MCF 10A (cell line): ENCODE measurements at regions of chr10 and their contacts with region 1.

Region 1: DNA sequence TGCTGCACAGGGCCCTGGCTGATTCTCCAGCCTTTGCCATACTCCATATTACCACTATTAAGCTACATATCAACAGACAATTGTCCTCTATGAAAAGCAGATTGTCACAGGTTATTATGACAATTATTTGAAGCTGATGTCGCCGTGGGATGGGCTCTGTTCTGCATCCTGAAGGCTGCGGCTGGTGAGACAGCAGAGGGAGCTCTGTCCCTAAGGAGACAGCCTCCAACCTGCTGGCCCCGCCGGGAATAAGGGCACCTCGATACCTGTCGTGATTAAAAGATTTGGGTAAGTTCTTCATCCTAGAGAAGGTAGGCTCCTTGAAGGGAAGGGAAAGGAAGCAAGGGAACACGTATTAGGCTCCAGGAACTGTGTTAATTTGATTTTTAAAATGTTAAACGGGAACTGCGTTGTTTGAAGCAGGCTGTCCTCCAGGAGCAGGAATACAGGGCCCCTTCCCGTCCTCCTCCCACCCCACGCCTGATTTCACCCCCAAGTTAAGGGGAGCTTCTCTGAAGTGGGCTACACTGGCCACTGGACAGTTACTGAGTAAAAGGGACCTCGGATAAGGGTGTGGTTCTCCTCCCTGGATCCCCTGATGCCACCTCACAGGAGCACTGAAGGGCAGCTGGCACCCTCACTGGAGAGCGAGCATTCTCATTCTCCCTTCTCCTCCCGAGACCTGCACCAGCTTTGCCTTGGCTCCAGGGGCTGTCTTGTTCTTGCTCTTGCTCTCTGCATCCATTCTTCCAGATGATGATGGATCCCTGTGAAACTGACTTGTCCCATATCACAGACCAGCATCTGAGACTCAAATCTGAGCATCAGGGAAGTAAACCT is 11.8 kb upstream of the TIAL1 start:
- DNase-seq: peak; percentile 66
- H3K4me3 Mint-ChIP-seq: no peak overlapping the region
- H3K27ac Mint-ChIP-seq: no peak overlapping the region
- H3K4me1 Mint-ChIP-seq: peaks cover 5% of the 10 kb centered on the region
- H3K27me3 Mint-ChIP-seq: no peaks in the 10 kb centered on the region
- CTCF ChIP-seq: peak; percentile 58

Region 2: DNA sequence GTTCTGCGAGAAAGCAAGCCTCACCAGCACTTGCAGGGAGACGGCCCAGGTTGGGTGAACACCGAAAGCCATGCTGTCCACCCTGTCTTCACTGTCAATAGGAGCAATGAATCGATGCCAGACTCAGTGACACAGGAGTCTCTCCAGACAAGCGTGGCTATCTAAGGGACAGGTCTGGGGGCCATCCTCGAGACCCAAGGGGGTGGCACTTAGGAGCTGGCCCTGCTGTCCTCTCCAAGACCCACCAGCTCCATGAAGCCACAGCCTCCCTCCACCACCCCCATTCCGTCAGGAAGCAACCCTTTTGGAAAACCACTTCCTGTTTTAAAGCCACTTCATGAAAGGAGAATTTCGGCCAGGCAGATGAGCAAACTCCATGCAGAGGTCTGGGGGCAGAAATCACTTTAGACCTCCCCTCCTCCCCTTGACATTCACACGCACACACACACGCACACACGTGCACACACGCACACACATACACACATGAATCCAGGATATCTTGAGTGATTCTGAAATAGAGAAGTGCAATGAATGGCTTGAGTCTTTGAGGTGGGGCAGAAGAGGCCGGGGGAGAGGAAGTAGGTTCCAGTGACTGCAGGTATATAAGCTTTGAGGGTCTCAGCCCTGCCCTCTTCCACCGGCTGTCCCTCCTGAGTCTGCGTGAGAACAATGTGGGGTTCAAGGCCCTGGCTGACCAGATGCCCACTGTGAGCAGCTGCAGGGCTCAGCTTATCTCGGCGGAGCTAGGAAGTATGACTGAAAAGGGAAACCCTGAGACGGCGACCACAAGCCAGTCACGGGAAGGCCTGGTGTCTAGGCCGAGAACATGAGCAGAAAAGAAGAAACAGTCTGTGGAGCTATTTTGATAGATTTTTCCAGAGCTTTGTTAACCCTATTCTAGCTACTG is 91.0 kb before region 1 on chr10:
- CTCF ChIA-PET with region 1: no interaction called
- POLR2A ChIA-PET with region 1: no interaction called
- intact Hi-C with region 1: no loop called
- DNase-seq: no peak
- H3K4me3 Mint-ChIP-seq: no peak overlapping the region
- H3K27ac Mint-ChIP-seq: peak overlapping the region; percentile 63
- H3K4me1 Mint-ChIP-seq: peaks cover 11% of the 10 kb centered on the region
- H3K27me3 Mint-ChIP-seq: no peaks in the 10 kb centered on the region
- CTCF ChIP-seq: no peak

Region 3: DNA sequence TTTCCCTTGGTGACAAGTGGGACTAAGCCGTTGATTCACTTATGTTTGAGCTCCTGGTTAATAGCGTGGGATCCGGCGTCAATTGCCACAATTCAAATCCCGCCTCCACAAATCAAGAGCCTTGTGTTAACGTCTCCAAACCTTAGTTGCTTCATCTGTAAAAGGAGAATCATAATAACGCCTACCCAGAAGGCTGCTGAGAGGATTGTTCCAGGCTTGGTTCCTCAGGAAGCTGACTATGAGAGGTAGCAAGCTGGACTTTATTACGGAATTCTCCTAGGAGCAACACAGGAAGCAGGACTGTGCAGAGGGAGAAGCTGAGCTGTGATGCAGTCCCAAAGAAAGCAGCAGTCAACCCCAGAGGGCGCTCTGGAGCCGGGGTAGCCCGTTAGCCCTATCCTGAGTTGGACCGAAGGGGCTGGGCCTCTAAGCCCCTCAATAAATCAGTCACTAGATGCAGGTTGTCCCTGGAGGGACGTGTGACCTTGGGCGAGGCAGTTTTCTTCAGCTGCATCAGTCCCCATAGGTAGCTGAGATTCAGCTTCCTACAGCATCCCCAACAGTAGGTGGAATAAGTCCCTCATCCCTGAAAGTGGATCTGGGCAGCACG is 35.8 kb after region 1 on chr10:
- CTCF ChIA-PET with region 1: interaction called, 11 read pairs
- POLR2A ChIA-PET with region 1: no interaction called
- intact Hi-C with region 1: no loop called
- DNase-seq: no peak
- H3K4me3 Mint-ChIP-seq: no peak overlapping the region
- H3K27ac Mint-ChIP-seq: no peak overlapping the region
- H3K4me1 Mint-ChIP-seq: no peaks in the 10 kb centered on the region
- H3K27me3 Mint-ChIP-seq: no peaks in the 10 kb centered on the region
- CTCF ChIP-seq: peak; percentile 4

Region 4: DNA sequence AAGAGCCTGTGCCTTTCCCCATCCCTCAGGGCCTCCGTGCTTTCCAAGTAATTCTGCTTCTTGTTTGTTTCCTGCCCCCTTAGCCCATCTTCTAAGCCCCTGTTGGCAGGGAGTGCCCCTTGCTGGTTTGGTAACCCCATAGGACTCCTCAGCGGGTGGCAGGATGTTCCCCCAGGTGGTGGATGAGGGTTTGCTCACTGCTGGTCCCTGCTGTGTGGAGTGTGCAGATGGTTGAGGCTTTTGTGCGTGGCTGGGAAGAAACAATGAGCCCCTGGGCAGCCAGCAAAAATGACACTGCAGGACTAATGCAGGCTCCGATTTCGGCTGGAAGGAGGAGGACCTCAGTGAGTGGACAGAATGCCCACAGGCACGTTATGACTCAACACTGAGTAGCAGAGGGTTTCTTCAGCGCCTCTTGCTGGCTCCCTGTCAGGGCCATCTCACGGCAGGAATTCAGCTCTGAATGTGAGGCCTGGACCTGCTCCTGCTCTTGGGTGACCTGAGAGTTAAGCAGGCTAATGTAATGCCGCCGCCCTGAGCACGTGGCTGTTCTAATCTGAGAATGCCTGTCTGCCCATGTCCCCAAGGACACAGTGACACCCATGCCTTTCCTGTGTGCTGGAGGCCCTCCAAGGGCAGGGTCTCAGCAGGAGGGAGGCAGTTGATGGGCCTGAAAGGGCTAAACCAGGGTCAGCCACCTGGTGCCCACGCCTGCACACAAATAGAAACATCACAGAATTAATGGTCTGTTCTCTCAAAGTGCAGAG is 59.2 kb after region 1 on chr10:
- CTCF ChIA-PET with region 1: interaction called, 10 read pairs
- POLR2A ChIA-PET with region 1: no interaction called
- intact Hi-C with region 1: no loop called
- DNase-seq: peak; percentile 98
- H3K4me3 Mint-ChIP-seq: peak overlapping the region; percentile 59
- H3K27ac Mint-ChIP-seq: peak overlapping the region; percentile 93
- H3K4me1 Mint-ChIP-seq: peaks cover 54% of the 10 kb centered on the region
- H3K27me3 Mint-ChIP-seq: no peaks in the 10 kb centered on the region
- CTCF ChIP-seq: no peak

Region 5: GRCh38 chr10:119786117-119786769 is 177.7 kb after region 1 on chr10:
- CTCF ChIA-PET with region 1: no interaction called
- POLR2A ChIA-PET with region 1: no interaction called
- intact Hi-C with region 1: no loop called
- DNase-seq: no peak
- H3K4me3 Mint-ChIP-seq: no peak overlapping the region
- H3K27ac Mint-ChIP-seq: no peak overlapping the region
- H3K4me1 Mint-ChIP-seq: no peaks in the 10 kb centered on the region
- H3K27me3 Mint-ChIP-seq: no peaks in the 10 kb centered on the region
- CTCF ChIP-seq: no peak

Region 6: GRCh38 chr10:119859420-119860258 is 251.1 kb after region 1 on chr10:
- CTCF ChIA-PET with region 1: interaction called, 22 read pairs
- POLR2A ChIA-PET with region 1: interaction called, 3 read pairs
- intact Hi-C with region 1: loop called (anchors 1 kb)
- DNase-seq: peak; percentile 63
- H3K4me3 Mint-ChIP-seq: no peak overlapping the region
- H3K27ac Mint-ChIP-seq: peak overlapping the region; percentile 35
- H3K4me1 Mint-ChIP-seq: peaks cover 23% of the 10 kb centered on the region
- H3K27me3 Mint-ChIP-seq: no peaks in the 10 kb centered on the region
- CTCF ChIP-seq: peak; percentile 38